Esophagus squamous epithelium (tissue), 5 donors: ENCODE measurements at regions of chr16 and their contacts with region 1.

Region 1: GRCh38 chr16:55444754-55445485 is 34.1 kb upstream of the MMP2 start:
- DNase-seq: no peak
- H3K4me3 ChIP-seq: no peak overlapping the region
- H3K27ac ChIP-seq: no peak overlapping the region
- H3K4me1 ChIP-seq: peaks cover 0 to under 1% (median under 1%) of the 10 kb centered on the region in 3 donors
- H3K27me3 ChIP-seq: no peaks in the 10 kb centered on the region
- CTCF ChIP-seq: no peak
- POLR2A ChIP-seq: no peak

Region 2: GRCh38 chr16:55508941-55509931 is 64.3 kb after region 1 on chr16 and contains the start of gene LPCAT2:
- intact Hi-C with region 1: loop called (anchors 10 kb)
- DNase-seq: no peak
- H3K4me3 ChIP-seq: peak within 1 kb of the TSS; percentile 64 to 77 (median 70)
- H3K27ac ChIP-seq: peak within 1 kb of the TSS; percentile 79 to 86 (median 82)
- H3K4me1 ChIP-seq: peaks cover 0 to 18% (median 0%) of the 10 kb centered on the region in 3 donors
- H3K27me3 ChIP-seq: peaks cover 0 to 16% (median 0%) of the 10 kb centered on the region in 4 donors
- CTCF ChIP-seq: no peak
- POLR2A ChIP-seq: peak in 2 of 4 donors; percentile 68 to 76
- total RNA-seq, gene LPCAT2: 10.0 to 21.7 (median 16.9) TPM